ENCODE measurements at regions of chr17 and their contacts with region 1.

Region 1: DNA sequence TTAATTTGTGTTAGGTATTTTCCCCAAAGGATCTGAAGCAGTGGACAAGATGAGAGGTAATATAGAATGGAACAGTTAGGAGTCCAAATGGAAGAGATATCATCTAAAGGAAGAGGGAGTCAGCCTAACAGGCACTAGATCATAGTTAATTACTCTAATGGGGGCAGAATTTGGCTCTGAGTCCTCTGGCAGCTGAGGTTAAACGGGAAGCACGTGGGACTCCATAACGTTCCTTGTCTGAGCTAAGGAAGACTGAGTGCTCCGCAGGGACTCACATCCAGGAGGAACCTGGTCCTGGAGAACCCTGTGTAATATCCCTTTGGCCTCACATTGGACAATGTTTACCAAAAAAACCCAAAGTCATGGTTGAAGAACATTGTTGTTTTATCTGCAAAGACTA is 46.6 kb upstream of the TEX2 start:
- DNase-seq: no peak
- ATAC-seq: peak; percentile 42

Region 2: GRCh38 chr17:64378890-64379354 is 69.2 kb after region 1 on chr17:
- intact Hi-C with region 1: no loop called
- DNase-seq: no peak
- ATAC-seq: no peak

Region 3: GRCh38 chr17:64411999-64412771 is 102.5 kb after region 1 on chr17:
- intact Hi-C with region 1: loop called (anchors 2 kb)
- DNase-seq: peak; percentile 78
- ATAC-seq: peak; percentile 72

Region 4: DNA sequence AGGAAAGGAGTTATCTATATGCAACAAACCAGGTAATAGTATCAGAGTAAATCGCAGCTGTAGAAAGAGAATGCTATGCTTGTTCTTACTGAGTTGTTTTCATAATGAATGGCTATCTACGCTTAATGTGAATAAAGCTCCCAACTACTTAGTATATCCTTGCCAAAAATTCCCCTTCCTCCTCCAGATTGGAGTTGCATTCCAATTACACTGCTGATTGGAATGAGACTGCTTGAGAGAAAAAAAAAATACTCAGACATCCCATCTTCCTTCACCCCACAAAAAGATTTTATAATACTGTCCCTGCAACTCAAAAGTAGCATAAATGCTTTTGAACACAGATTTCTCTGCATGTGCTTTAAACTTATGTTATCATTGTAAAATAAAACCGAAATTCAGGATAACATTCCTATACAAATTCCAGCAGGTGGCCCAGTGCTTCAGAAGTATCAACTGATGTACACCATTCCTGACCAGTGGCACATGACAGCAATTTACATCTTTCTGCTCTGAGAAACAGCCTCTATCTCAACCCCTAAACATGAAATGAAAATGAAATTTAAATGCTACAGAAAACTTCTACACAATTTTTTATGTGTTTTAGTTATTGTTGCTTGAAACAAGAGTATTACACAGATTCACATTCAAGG is 305.4 kb after region 1 on chr17:
- intact Hi-C with region 1: no loop called
- DNase-seq: no peak
- ATAC-seq: no peak